ENCODE measurements at regions of chr7 and their contacts with region 1.

Region 1: DNA sequence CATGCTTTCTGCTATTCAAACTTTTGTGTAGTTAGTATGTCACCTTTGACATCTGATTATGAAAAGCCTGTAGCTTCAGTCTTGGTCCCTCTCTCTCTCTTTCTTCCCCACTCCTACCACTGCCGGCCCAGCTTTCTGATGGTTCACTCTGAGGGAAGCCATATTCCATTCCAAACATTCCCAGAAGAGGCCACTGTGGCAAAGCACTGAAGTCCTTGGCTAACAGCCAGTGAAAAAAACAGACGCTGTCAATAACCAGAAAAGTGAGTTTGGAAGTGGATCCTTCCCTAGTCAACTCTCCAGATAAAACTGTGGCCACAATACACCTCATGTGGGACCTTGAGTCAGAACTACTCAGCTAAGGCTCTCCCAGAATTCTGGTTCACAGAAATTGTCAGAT is 950.7 kb upstream of the PHF14 start:
- DNase-seq: peak; percentile 59 to 60
- H3K4me3 ChIP-seq: no peak overlapping the region
- H3K4me3 Mint-ChIP-seq: no peak overlapping the region
- H3K27ac Mint-ChIP-seq: no peak overlapping the region
- H3K4me1 ChIP-seq: no peaks in the 10 kb centered on the region
- H3K4me1 Mint-ChIP-seq: peaks cover 7% of the 10 kb centered on the region
- H3K27me3 ChIP-seq: no peaks in the 10 kb centered on the region
- H3K27me3 Mint-ChIP-seq: no peaks in the 10 kb centered on the region
- CTCF ChIP-seq: peak; percentile 28 to 32

Region 2: GRCh38 chr7:10128748-10129147 is 105.8 kb after region 1 on chr7:
- CTCF ChIA-PET with region 1: interaction called, 3 read pairs
- POLR2A ChIA-PET with region 1: no interaction called
- intact Hi-C with region 1: loop called (anchors 2 kb)
- DNase-seq: peak in 1 of 2 experiments; percentile 13
- H3K4me3 ChIP-seq: no peak overlapping the region
- H3K4me3 Mint-ChIP-seq: no peak overlapping the region
- H3K27ac Mint-ChIP-seq: no peak overlapping the region
- H3K4me1 ChIP-seq: no peaks in the 10 kb centered on the region
- H3K4me1 Mint-ChIP-seq: no peaks in the 10 kb centered on the region
- H3K27me3 ChIP-seq: no peaks in the 10 kb centered on the region
- H3K27me3 Mint-ChIP-seq: no peaks in the 10 kb centered on the region
- CTCF ChIP-seq: peak; percentile 15 to 20

Region 3: DNA sequence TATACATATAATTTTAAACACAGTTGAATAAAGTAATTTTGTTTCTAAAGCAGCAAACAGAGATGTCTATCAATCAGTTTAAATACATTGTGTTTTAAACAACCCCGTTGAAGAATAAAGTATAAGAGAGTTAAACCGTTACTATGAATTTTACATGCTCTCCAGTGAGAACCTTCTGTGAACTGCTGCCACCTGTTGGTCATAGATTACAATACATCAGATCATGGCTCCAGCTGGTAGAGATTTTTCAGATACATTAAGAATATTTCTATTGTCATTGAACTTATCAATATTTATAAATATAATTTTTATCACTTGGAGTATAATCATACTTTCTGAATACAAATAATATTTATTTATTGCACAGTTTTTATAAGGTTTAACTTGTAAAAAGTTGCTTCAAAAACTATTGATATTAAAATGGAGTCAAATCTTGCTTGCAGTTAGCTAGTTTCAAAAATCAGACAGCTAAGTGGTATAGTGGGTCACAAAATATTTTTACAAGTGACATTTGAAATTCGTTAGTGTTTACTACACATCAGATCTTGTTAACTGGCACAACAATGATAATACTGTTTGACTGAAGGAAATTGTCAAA is 389.6 kb after region 1 on chr7:
- CTCF ChIA-PET with region 1: no interaction called
- POLR2A ChIA-PET with region 1: no interaction called
- intact Hi-C with region 1: loop called (anchors 2 kb)
- DNase-seq: peak in 1 of 2 experiments; percentile 52
- H3K4me3 ChIP-seq: no peak overlapping the region
- H3K4me3 Mint-ChIP-seq: no peak overlapping the region
- H3K27ac Mint-ChIP-seq: no peak overlapping the region
- H3K4me1 ChIP-seq: no peaks in the 10 kb centered on the region
- H3K4me1 Mint-ChIP-seq: no peaks in the 10 kb centered on the region
- H3K27me3 ChIP-seq: no peaks in the 10 kb centered on the region
- H3K27me3 Mint-ChIP-seq: peaks cover 3% of the 10 kb centered on the region
- CTCF ChIP-seq: peak; percentile 48 to 69